Prostate gland (tissue), 2 donors: ENCODE measurements at regions of chr19 and their contacts with region 1.

Region 1: DNA sequence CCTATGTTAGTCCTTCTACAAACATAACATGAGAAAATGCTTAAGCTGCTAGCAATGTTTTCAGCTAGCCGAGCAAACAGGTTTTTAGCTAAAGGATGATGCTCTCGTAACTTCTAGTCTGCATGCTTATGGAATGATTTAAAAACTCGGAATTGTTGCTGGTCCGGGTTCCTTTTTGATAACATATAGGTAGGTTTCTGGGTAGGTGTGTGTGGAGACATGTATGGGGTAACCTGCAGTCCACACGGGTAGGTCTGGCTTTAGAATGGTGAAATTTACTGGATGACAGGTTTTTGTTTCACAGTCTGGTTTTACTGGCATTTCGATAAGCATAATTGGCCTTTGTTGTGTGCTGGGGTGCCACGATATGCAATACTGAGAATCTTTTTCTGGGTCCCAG is 4.4 kb downstream of the ZNF813 start:
- DNase-seq: no peak
- H3K4me3 ChIP-seq: no peak overlapping the region
- H3K27ac ChIP-seq: peak overlapping the region in 1 of 2 donors; percentile 79
- H3K4me1 ChIP-seq: peaks cover 8% of the 10 kb centered on the region
- H3K27me3 ChIP-seq: no peaks in the 10 kb centered on the region
- CTCF ChIP-seq: no peak
- POLR2A ChIP-seq: no peak

Region 2: GRCh38 chr19:53431399-53432087 is 40.4 kb before region 1 on chr19 and contains the start of gene ZNF761:
- intact Hi-C with region 1: loop called (anchors 5 kb)
- DNase-seq: peak; percentile 99
- H3K4me3 ChIP-seq: peak within 1 kb of the TSS; percentile 54 to 59
- H3K27ac ChIP-seq: peak within 1 kb of the TSS; percentile 92 to 96
- H3K4me1 ChIP-seq: no peaks in the 10 kb centered on the region
- H3K27me3 ChIP-seq: no peaks in the 10 kb centered on the region
- CTCF ChIP-seq: peak; percentile 10 to 78 (median 41)
- POLR2A ChIP-seq: peak; percentile 91
- total RNA-seq, gene ZNF761: 48.3 to 51.7 TPM

Region 3: GRCh38 chr19:53606031-53606701 is 134.2 kb after region 1 on chr19:
- intact Hi-C with region 1: no loop called
- DNase-seq: no peak
- H3K4me3 ChIP-seq: no peak overlapping the region
- H3K27ac ChIP-seq: no peak overlapping the region
- H3K4me1 ChIP-seq: no peaks in the 10 kb centered on the region
- H3K27me3 ChIP-seq: no peaks in the 10 kb centered on the region
- CTCF ChIP-seq: no peak
- POLR2A ChIP-seq: no peak

Region 4: GRCh38 chr19:53792721-53793433 is 321.0 kb after region 1 on chr19:
- intact Hi-C with region 1: no loop called
- DNase-seq: peak; percentile 77
- H3K4me3 ChIP-seq: no peak overlapping the region
- H3K27ac ChIP-seq: no peak overlapping the region
- H3K4me1 ChIP-seq: no peaks in the 10 kb centered on the region
- H3K27me3 ChIP-seq: no peaks in the 10 kb centered on the region
- CTCF ChIP-seq: peak; percentile 78 to 99 (median 94)
- POLR2A ChIP-seq: no peak